ENCODE measurements at regions of chr1 and their contacts with region 1.

Region 1: GRCh38 chr1:1605034-1605591 is 5.2 kb upstream of the FNDC10 start:
- DNase-seq: no peak
- ATAC-seq: no peak
- H3K4me3 ChIP-seq: no peak overlapping the region
- H3K27ac ChIP-seq: no peak overlapping the region
- H3K4me1 ChIP-seq: no peaks in the 10 kb centered on the region
- H3K27me3 ChIP-seq: peaks cover 4% of the 10 kb centered on the region; the same call in 1 of the 2 replicates
- CTCF ChIP-seq: no peak

Region 2: GRCh38 chr1:1943834-1944570 is 338.9 kb after region 1 on chr1:
- CTCF ChIA-PET with region 1: no interaction called
- POLR2A ChIA-PET with region 1: interaction called, 11 read pairs
- intact Hi-C with region 1: no loop called
- DNase-seq: peak; percentile 74
- ATAC-seq: peak; percentile 98
- H3K4me3 ChIP-seq: peak overlapping the region; percentile 70
- H3K27ac ChIP-seq: no peak overlapping the region
- H3K4me1 ChIP-seq: peaks cover 4% of the 10 kb centered on the region; the same call in 1 of the 2 replicates
- H3K27me3 ChIP-seq: no peaks in the 10 kb centered on the region
- CTCF ChIP-seq: peak; percentile 96

Measured in PC-3 (cell line).